ENCODE measurements at regions of chr12 and their contacts with region 1.

Region 1: GRCh38 chr12:124636138-124636978 is 68.9 kb upstream of the NCOR2 start:
- DNase-seq: peak; percentile 92

Region 2: DNA sequence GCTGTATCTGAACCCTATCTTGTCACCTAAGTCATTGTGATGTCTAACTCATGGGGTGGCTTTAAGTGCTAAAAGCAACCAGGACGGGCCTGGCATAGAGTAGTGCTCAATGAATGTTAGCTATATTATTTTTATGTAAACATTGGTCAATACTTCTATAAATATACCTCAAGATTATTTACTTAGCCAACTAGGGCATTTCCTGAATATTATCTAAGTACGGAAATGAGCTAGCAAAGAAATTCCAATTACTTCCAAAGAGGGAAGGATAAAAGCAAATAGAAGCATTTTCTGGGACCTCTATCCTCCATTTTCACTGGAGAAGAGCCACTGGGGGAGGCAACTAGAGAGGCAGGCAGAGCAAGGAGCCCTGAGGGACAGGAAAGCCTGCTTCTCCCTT is 684.3 kb before region 1 on chr12:
- intact Hi-C with region 1: loop called in 1 of 2 experiments (anchors 5 kb)
- DNase-seq: no peak